ENCODE measurements at regions of chr1 and their contacts with region 1.

Region 1: GRCh38 chr1:151443846-151444782 is 15.2 kb downstream of the POGZ start:
- DNase-seq: peak; percentile 80
- ATAC-seq: peak; percentile 96
- H3K4me3 Mint-ChIP-seq: no peak overlapping the region
- H3K27ac Mint-ChIP-seq: peak overlapping the region; percentile 42
- H3K4me1 Mint-ChIP-seq: peaks cover 59% of the 10 kb centered on the region
- H3K27me3 Mint-ChIP-seq: no peaks in the 10 kb centered on the region

Region 2: GRCh38 chr1:150410582-150411101 is 1033.5 kb before region 1 on chr1:
- CTCF ChIA-PET with region 1: no interaction called
- POLR2A ChIA-PET with region 1: no interaction called
- intact Hi-C with region 1: no loop called
- DNase-seq: no peak
- ATAC-seq: no peak
- H3K4me3 Mint-ChIP-seq: no peak overlapping the region
- H3K27ac Mint-ChIP-seq: peak overlapping the region; percentile 38
- H3K4me1 Mint-ChIP-seq: peaks cover 60% of the 10 kb centered on the region
- H3K27me3 Mint-ChIP-seq: no peaks in the 10 kb centered on the region

Region 3: GRCh38 chr1:151472856-151473731 is 29.0 kb after region 1 on chr1:
- CTCF ChIA-PET with region 1: interaction called, 15 read pairs
- POLR2A ChIA-PET with region 1: no interaction called
- intact Hi-C with region 1: loop called in 1 of 2 experiments (anchors 1 kb)
- DNase-seq: peak; percentile 52
- ATAC-seq: no peak
- H3K4me3 Mint-ChIP-seq: peak overlapping the region; percentile 42
- H3K27ac Mint-ChIP-seq: peak overlapping the region; percentile 59
- H3K4me1 Mint-ChIP-seq: peaks cover 24% of the 10 kb centered on the region
- H3K27me3 Mint-ChIP-seq: peaks cover 3% of the 10 kb centered on the region

Region 4: GRCh38 chr1:151510957-151511635 is 67.0 kb after region 1 on chr1 and contains the start of gene CGN:
- CTCF ChIA-PET with region 1: interaction called, 6 read pairs
- POLR2A ChIA-PET with region 1: interaction called, 3 read pairs
- intact Hi-C with region 1: loop called in 1 of 2 experiments (anchors 5 kb)
- DNase-seq: peak; percentile 91
- ATAC-seq: peak; percentile 98
- H3K4me3 Mint-ChIP-seq: peak within 1 kb of the TSS; percentile 80
- H3K27ac Mint-ChIP-seq: peak within 1 kb of the TSS; percentile 47
- H3K4me1 Mint-ChIP-seq: peaks cover 23% of the 10 kb centered on the region
- H3K27me3 Mint-ChIP-seq: no peaks in the 10 kb centered on the region
- total RNA-seq, gene CGN: 0.67 to 1.4 TPM

Region 5: GRCh38 chr1:151594143-151594625 is 150.1 kb after region 1 on chr1:
- CTCF ChIA-PET with region 1: interaction called, 7 read pairs
- POLR2A ChIA-PET with region 1: no interaction called
- intact Hi-C with region 1: loop called in 1 of 2 experiments (anchors 10 kb)
- DNase-seq: peak; percentile 94
- ATAC-seq: peak; percentile 100
- H3K4me3 Mint-ChIP-seq: peak overlapping the region; percentile 53
- H3K27ac Mint-ChIP-seq: peak overlapping the region; percentile 29
- H3K4me1 Mint-ChIP-seq: peaks cover 9% of the 10 kb centered on the region
- H3K27me3 Mint-ChIP-seq: peaks cover 5% of the 10 kb centered on the region

Region 6: DNA sequence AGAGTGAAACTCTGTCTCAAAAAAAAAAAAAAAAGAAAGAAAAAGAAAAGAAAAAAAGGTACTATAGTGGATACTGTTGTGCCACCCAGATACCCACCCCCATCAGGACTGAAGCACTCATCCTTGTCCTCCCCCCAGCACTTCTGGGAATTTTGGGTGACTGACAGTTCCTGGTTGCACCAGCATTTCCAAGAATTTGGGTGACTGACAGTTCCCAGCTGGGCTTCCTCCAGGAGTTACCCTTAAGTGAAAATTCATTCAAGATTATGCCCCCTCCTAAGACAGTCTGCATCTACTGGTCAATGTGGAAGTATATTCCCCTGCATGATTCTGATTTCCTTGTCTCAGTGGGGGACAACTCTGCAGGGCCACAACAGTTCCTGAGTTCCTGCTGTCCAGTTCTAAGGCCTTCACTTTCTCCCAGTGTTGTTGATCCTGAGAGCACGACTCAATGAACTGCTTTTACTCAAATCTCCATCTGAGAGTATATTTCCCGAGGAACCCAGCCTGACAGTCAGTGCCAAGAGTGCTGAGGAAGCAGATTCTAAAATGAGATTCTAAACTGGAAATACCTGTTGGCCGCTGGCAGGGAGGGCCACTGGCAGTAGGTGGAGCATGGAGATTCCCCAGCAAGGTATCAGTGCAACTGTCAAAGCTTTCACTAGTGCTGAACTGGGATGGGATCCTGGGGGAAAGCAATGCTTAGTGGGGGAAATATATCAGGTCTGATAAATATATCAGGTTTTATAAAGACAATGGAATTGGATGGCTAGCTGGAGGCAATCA is 295.7 kb after region 1 on chr1:
- CTCF ChIA-PET with region 1: interaction called, 8 read pairs
- POLR2A ChIA-PET with region 1: no interaction called
- intact Hi-C with region 1: loop called (anchors 1 to 10 kb)
- DNase-seq: no peak
- ATAC-seq: no peak
- H3K4me3 Mint-ChIP-seq: no peak overlapping the region
- H3K27ac Mint-ChIP-seq: no peak overlapping the region
- H3K4me1 Mint-ChIP-seq: no peaks in the 10 kb centered on the region
- H3K27me3 Mint-ChIP-seq: peaks cover 1% of the 10 kb centered on the region

Measured in activated CD4-positive, alpha-beta T cell treated with anti-CD3 and anti-CD28 coated beads for 36 hours (primary cell).